ENCODE measurements at regions of chrX and their contacts with region 1.

Region 1: DNA sequence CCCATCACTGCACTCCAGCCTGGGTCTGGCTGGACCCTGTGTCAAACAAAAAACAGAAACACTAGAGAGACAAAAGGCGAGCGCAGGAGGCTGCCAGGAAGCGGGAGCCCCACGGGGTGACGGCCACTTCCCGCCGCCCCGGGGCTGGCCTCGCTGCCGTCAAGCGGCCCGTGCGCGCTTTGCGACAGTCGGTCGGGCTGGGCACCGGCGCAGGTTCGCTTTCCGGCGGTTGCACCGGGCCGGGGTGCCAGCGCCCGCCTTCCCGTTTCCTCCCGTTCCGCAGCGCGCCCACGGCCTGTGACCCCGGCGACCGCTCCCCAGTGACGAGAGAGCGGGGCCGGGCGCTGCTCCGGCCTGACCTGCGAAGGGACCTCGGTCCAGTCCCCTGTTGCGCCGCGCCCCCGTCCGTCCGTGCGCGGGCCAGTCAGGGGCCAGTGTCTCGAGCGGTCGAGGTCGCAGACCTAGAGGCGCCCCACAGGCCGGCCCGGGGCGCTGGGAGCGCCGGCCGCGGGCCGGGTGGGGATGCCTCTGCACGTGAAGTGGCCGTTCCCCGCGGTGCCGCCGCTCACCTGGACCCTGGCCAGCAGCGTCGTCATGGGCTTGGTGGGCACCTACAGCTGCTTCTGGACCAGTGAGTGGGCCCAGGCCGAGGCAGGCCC is at the start of gene TAFAZZIN:
- DNase-seq: peak; percentile 81
- ATAC-seq: peak; percentile 71
- H3K4me3 Mint-ChIP-seq: peak within 1 kb of the TSS; percentile 93
- H3K27ac Mint-ChIP-seq: peak within 1 kb of the TSS; percentile 95
- H3K4me1 Mint-ChIP-seq: peaks cover 13% of the 10 kb centered on the region
- H3K27me3 Mint-ChIP-seq: no peaks in the 10 kb centered on the region
- total RNA-seq, gene TAFAZZIN: 76.5 to 77.4 TPM

Region 2: DNA sequence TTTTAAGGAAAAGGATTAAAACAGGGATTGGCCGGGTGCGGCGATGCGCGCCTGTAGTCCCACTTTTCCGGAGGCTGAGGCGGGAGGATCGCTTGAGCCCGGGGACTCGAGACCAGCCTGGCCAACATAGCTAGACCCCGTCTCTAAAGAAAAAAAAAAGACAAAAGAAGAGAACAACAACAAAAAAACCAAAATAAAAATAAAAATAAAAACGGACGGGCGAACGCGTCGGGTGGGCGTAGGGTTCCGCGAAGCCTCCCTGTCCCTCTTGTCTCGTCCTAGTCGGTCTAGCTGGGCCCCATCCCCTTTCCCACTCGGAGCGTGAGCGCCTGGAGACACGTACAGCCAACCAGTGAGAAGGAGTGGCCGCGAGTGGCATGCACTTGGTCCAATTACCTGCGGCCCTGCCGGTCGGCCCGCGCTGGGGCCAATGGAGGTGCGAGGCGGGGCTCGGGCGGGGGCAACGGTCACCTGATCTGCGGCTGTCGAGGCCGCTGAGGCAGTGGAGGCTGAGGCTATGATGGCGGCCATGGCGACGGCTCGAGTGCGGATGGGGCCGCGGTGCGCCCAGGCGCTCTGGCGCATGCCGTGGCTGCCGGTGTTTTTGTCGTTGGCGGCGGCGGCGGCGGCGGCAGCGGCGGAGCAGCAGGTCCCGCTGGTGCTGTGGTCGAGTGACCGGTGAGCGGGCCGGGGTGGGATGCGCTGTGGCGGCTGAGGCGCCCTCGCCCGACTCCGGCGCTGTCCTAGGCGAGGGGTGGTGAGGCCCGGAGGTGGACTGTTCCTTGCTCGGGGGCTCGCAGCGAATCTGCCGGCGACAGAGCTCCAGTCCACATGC is 16.9 kb after region 1 on chrX and contains the start of gene ATP6AP1:
- CTCF ChIA-PET with region 1: no interaction called
- POLR2A ChIA-PET with region 1: interaction called, 17 read pairs
- DNase-seq: peak; percentile 92
- ATAC-seq: peak; percentile 99
- H3K4me3 Mint-ChIP-seq: peak within 1 kb of the TSS; percentile 77
- H3K27ac Mint-ChIP-seq: peak within 1 kb of the TSS; percentile 74
- H3K4me1 Mint-ChIP-seq: peaks cover 30% of the 10 kb centered on the region
- H3K27me3 Mint-ChIP-seq: no peaks in the 10 kb centered on the region
- total RNA-seq, gene ATP6AP1: 41.5 to 43.5 TPM

Measured in activated CD8-positive, alpha-beta T cell treated with anti-CD3 and anti-CD28 coated beads, Interleukin-2, amount 10 ng/mL, durations not matched to agents 7 days and 5 days (primary cell).